MCF 10A (cell line): ENCODE measurements at regions of chr1 and their contacts with region 1.

Region 1: DNA sequence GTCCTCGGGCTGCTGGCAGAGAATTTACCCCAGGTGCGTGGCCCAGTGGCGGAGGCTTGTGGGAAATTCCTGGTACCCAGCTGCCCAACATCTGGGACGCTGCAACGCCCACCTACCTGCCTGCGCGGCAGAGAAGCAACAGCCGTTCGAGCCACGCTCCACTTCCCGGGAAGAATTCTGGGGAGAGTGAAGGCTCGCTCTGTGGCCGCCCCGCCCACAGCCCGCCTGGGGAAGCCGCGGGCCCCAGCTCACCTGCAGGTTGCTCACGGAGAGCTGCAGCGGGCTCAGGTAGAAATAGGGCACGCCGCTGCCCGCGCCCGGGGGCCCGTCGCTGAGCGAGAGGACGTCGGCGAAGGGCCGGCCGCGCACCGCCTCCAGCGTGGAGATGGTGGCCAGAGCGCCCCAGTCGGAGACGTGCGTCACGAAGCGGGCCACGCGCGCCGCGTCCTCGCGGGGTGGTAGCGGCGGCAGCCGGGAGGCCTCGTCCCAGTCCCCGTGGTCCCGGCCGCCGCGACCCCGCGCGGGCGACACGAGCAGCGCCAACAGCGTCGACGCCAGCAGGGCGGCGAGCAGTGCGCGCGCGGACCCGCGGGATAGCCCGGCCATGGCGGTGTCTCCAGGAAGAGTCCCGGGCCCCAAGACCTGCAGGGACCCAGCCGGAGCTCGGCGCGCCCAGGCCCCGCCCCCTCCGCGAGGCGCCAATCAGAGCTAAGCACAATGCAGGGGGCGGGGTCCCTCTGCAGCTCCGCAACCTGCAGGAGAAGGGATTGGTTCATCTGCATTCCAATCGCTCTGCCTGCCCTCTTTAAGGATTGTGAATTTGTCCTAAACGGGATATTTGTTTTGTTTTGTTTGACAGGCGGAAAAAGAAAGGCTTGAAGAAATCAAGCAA is at the start of gene CREG1:
- DNase-seq: peak; percentile 98
- H3K4me3 Mint-ChIP-seq: peak within 1 kb of the TSS; percentile 87
- H3K27ac Mint-ChIP-seq: peak within 1 kb of the TSS; percentile 36
- H3K4me1 Mint-ChIP-seq: peaks cover 59% of the 10 kb centered on the region
- H3K27me3 Mint-ChIP-seq: no peaks in the 10 kb centered on the region
- CTCF ChIP-seq: no peak
- total RNA-seq, gene CREG1: 136 and 154 TPM in 2 replicates

Region 2: DNA sequence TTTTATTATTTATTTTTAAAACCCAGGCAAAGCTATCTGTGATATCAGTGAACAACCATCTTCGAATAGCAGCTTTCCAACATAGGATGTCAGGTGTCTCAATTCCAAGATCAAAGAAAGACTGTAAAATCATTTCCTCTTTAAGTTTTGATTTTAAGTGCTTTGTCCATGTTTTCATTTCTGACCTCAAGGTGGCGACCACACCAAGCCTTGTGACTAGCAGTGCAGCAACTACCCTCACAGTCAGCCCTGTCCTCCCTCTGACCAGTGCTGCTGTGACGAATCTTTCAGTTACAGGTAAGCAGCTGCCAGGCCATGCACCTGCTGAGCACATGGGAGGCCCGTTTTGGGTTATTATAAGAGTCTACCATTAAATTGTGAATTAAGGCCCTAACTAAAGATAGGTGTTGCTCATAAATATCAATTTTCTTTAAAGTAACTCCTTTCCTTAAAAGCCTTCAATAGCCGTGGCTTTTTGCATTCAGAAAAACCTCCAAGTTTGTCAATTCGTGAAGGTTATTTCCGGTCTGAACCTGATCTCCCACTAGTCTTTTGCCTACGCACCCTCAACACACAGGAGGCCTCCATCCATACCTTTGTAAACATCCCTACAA is 152.0 kb before region 1 on chr1:
- CTCF ChIA-PET with region 1: interaction called, 10 read pairs
- POLR2A ChIA-PET with region 1: interaction called, 3 read pairs
- intact Hi-C with region 1: loop called (anchors 1 kb)
- DNase-seq: peak; percentile 76
- H3K4me3 Mint-ChIP-seq: no peak overlapping the region
- H3K27ac Mint-ChIP-seq: peak overlapping the region; percentile 23
- H3K4me1 Mint-ChIP-seq: peaks cover 6% of the 10 kb centered on the region
- H3K27me3 Mint-ChIP-seq: no peaks in the 10 kb centered on the region
- CTCF ChIP-seq: peak; percentile 72

Region 3: GRCh38 chr1:167491586-167492461 is 61.6 kb before region 1 on chr1:
- CTCF ChIA-PET with region 1: no interaction called
- POLR2A ChIA-PET with region 1: no interaction called
- intact Hi-C with region 1: no loop called
- DNase-seq: no peak
- H3K4me3 Mint-ChIP-seq: no peak overlapping the region
- H3K27ac Mint-ChIP-seq: no peak overlapping the region
- H3K4me1 Mint-ChIP-seq: no peaks in the 10 kb centered on the region
- H3K27me3 Mint-ChIP-seq: peaks cover 40% of the 10 kb centered on the region
- CTCF ChIP-seq: no peak

Region 4: GRCh38 chr1:167542109-167543032 is 11.0 kb before region 1 on chr1:
- CTCF ChIA-PET with region 1: interaction called, 139 read pairs
- POLR2A ChIA-PET with region 1: interaction called, 99 read pairs
- intact Hi-C with region 1: no loop called
- DNase-seq: peak; percentile 77
- H3K4me3 Mint-ChIP-seq: no peak overlapping the region
- H3K27ac Mint-ChIP-seq: peak overlapping the region; percentile 29
- H3K4me1 Mint-ChIP-seq: peaks cover 42% of the 10 kb centered on the region
- H3K27me3 Mint-ChIP-seq: no peaks in the 10 kb centered on the region
- CTCF ChIP-seq: no peak

Region 5: GRCh38 chr1:167573026-167573425 is 19.6 kb after region 1 on chr1:
- CTCF ChIA-PET with region 1: interaction called, 20 read pairs
- POLR2A ChIA-PET with region 1: interaction called, 152 read pairs
- intact Hi-C with region 1: no loop called
- DNase-seq: peak; percentile 57
- H3K4me3 Mint-ChIP-seq: no peak overlapping the region
- H3K27ac Mint-ChIP-seq: peak overlapping the region; percentile 76
- H3K4me1 Mint-ChIP-seq: peaks cover 18% of the 10 kb centered on the region
- H3K27me3 Mint-ChIP-seq: no peaks in the 10 kb centered on the region
- CTCF ChIP-seq: no peak

Region 6: DNA sequence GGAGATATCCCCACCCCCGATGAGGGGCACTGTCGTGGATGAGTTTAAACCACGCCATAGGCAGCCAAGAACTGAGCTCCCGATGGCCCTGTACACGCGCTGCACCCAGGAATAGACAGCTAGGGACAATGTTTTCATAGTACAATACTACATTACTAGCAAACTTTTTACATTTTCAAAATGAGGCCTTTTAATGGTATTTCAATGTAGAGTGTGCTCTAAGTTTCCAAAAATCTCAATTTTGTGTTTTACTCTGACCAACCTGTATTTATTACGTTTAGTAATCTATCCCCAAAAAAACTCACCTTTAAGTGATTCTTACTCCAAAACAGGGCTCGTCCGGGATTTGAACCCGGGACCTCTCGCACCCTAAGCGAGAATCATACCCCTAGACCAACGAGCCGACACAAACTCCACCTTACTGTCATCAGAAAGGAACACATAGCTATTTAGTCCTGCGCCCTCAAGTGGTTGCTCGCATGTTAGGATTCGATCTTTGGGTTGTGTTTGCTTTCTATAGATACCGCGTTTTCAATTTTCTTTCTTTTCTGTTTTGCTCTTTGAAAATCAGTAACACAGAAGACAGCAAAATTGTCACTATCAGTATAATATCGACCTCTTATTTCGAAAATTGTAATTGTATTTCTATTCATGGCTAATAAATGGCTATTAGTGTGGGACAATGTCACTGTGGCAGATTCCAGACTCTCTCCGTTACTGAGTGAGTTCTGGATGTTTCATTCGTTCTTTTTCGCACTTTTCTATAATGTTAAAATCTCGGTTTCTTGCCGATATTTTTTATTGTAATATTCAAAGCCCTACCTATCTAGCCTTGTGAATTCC is 162.0 kb after region 1 on chr1:
- CTCF ChIA-PET with region 1: interaction called, 5 read pairs
- POLR2A ChIA-PET with region 1: interaction called, 23 read pairs
- intact Hi-C with region 1: no loop called
- DNase-seq: peak; percentile 97
- H3K4me3 Mint-ChIP-seq: peak overlapping the region; percentile 88
- H3K27ac Mint-ChIP-seq: peak overlapping the region; percentile 91
- H3K4me1 Mint-ChIP-seq: peaks cover 16% of the 10 kb centered on the region
- H3K27me3 Mint-ChIP-seq: no peaks in the 10 kb centered on the region
- CTCF ChIP-seq: peak; percentile 98